Activated CD8-positive, alpha-beta T cell treated with anti-CD3 and anti-CD28 coated beads for 36 hours (primary cell): ENCODE measurements at regions of chr11 and their contacts with region 1.

Region 1: DNA sequence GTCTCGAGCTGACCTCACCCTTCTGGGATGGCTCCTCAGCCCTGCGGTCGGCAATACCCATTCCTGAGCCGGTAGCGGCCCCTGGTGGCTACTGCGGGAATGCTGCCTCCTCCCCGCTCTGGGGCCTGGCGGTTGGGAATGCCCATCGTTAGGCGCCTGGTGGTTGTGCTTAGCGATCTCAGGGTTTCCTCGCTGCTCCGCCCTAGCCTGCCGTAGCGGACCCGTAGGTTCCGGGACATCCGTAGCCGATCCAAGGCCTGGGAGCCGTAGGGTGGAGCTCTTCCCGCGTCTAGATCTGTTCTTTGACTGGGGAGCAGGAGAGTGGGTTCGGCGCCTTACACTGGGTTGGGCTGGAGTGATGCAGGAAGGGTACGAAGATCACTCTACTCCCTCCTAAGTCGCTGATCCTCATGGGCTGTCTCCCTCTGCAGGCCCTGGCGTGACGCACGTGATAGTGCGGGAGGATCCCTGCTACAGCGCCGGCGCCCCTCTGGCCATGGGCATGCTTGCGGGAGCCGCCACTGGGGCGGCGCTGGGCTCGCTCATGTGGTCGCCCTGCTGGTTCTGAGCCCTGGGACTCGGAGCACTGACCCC is 14.8 kb downstream of the PLEKHB1 start:
- DNase-seq: peak; percentile 87
- ATAC-seq: peak; percentile 94
- H3K4me3 Mint-ChIP-seq: peak overlapping the region; percentile 29
- H3K27ac Mint-ChIP-seq: no peak overlapping the region
- H3K4me1 Mint-ChIP-seq: no peaks in the 10 kb centered on the region
- H3K27me3 Mint-ChIP-seq: no peaks in the 10 kb centered on the region
- CTCF ChIP-seq: peak; percentile 99

Region 2: DNA sequence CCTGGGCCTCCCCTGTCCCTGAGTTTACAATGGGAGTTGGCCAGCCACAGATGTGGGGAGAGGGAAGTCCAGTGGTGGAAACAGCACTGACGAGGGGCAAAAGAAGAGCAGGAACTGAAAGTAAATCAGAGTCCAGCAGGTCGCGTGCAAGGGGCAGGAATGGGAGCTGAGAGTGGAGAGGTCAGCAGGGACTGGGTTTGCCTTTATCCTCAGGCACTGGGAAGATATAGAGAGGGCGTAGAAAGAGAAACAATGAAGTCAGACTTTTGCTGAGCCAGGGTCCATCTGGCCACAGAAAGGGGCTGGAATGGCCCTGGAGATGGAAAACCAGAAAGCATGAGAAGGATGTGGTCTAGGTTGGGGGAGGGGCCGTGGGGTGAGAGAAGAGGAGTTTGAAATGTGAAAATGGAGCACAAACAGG is 380.5 kb before region 1 on chr11:
- CTCF ChIA-PET with region 1: no interaction called
- POLR2A ChIA-PET with region 1: no interaction called
- intact Hi-C with region 1: no loop called
- DNase-seq: no peak
- ATAC-seq: no peak
- H3K4me3 Mint-ChIP-seq: no peak overlapping the region
- H3K27ac Mint-ChIP-seq: no peak overlapping the region
- H3K4me1 Mint-ChIP-seq: no peaks in the 10 kb centered on the region
- H3K27me3 Mint-ChIP-seq: no peaks in the 10 kb centered on the region
- CTCF ChIP-seq: no peak

Region 3: GRCh38 chr11:73402834-73403185 is 258.3 kb before region 1 on chr11:
- CTCF ChIA-PET with region 1: interaction called, 14 read pairs
- POLR2A ChIA-PET with region 1: no interaction called
- intact Hi-C with region 1: no loop called
- DNase-seq: peak; percentile 37
- ATAC-seq: peak; percentile 46
- H3K4me3 Mint-ChIP-seq: no peak overlapping the region
- H3K27ac Mint-ChIP-seq: no peak overlapping the region
- H3K4me1 Mint-ChIP-seq: no peaks in the 10 kb centered on the region
- H3K27me3 Mint-ChIP-seq: no peaks in the 10 kb centered on the region
- CTCF ChIP-seq: no peak

Region 4: GRCh38 chr11:73478738-73479347 is 182.3 kb before region 1 on chr11:
- CTCF ChIA-PET with region 1: interaction called, 18 read pairs
- POLR2A ChIA-PET with region 1: no interaction called
- intact Hi-C with region 1: no loop called
- DNase-seq: peak; percentile 2
- ATAC-seq: no peak
- H3K4me3 Mint-ChIP-seq: no peak overlapping the region
- H3K27ac Mint-ChIP-seq: no peak overlapping the region
- H3K4me1 Mint-ChIP-seq: no peaks in the 10 kb centered on the region
- H3K27me3 Mint-ChIP-seq: no peaks in the 10 kb centered on the region
- CTCF ChIP-seq: peak; percentile 50

Region 5: DNA sequence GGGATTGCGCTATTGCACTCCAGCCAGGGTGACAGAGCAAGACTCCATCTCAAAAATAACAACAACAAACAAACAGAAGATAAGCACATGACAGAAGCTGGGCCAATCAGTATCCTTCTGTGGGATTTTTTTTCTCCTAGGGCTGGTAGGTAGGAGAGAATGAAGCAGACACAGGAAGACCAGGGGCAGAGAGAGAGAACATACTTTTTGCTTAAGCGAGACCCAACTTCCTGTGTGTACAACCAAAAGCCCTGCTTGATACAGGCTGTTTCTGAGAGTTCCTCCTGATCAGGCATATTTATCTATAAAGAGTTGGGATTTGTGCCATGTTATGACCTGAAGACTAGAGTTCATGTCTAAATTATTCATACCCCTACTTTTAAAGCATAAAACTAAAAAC is 27.1 kb before region 1 on chr11:
- CTCF ChIA-PET with region 1: interaction called, 26 read pairs
- POLR2A ChIA-PET with region 1: no interaction called
- intact Hi-C with region 1: no loop called
- DNase-seq: no peak
- ATAC-seq: no peak
- H3K4me3 Mint-ChIP-seq: no peak overlapping the region
- H3K27ac Mint-ChIP-seq: no peak overlapping the region
- H3K4me1 Mint-ChIP-seq: peaks cover 6% of the 10 kb centered on the region
- H3K27me3 Mint-ChIP-seq: no peaks in the 10 kb centered on the region
- CTCF ChIP-seq: no peak

Region 6: GRCh38 chr11:73760679-73761402 is 99.7 kb after region 1 on chr11 and contains the start of gene RAB6A:
- CTCF ChIA-PET with region 1: no interaction called
- POLR2A ChIA-PET with region 1: no interaction called
- intact Hi-C with region 1: no loop called
- DNase-seq: peak; percentile 100
- ATAC-seq: peak; percentile 94
- H3K4me3 Mint-ChIP-seq: peak within 1 kb of the TSS; percentile 87
- H3K27ac Mint-ChIP-seq: peak within 1 kb of the TSS; percentile 94
- H3K4me1 Mint-ChIP-seq: peaks cover 23% of the 10 kb centered on the region
- H3K27me3 Mint-ChIP-seq: no peaks in the 10 kb centered on the region
- CTCF ChIP-seq: no peak
- total RNA-seq, gene RAB6A: 75.3 to 77.6 TPM